ENCODE measurements at regions of chr2 and their contacts with region 1.

Region 1: DNA sequence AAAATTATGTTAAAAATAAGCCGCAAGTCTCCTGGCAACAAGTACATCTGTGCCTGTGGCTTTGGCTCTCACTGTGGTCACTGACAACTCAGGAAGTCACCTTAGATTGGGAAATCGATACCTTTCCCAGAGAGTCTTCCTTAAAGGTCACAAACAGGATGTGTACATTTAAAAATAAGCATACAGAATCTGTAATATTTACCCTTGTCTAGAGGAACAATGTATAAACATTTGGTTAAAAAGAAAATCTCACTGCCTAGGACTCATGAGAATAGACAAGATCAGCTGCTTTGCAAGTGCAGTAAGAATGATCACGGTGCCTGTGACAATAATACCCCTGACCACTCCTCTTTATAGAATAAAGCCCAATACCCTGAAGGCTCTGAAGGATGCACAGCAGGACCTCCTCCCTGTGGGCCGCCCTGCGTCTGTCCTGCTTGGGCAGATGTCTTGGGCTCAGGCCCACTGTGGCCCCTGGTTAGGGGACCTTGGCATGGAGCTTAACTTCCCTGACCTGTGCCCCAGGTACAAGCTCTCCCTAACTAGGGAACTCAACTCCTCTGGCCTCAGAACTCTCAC is 98.0 kb upstream of the MGAT4A start:
- DNase-seq: no peak
- ATAC-seq: no peak
- H3K4me3 ChIP-seq: no peak overlapping the region
- H3K27ac ChIP-seq: no peak overlapping the region
- H3K4me1 ChIP-seq: no peaks in the 10 kb centered on the region
- H3K27me3 ChIP-seq: peaks cover 4 to 52% of the 10 kb centered on the region in 2 experiments; a peak in 3 of 5 replicates
- CTCF ChIP-seq: no peak
- EP300 ChIP-seq: no peak
- POLR2A ChIP-seq: no peak
- RAD21 ChIP-seq: no peak

Region 2: GRCh38 chr2:98654699-98655495 is 174.0 kb before region 1 on chr2:
- CTCF ChIA-PET with region 1: no interaction called
- POLR2A ChIA-PET with region 1: no interaction called
- in situ Hi-C with region 1: loop called (anchors 5 kb)
- intact Hi-C with region 1: no loop called
- DNase-seq: peak in 1 of 4 experiments; percentile 6
- ATAC-seq: no peak
- H3K4me3 ChIP-seq: no peak overlapping the region
- H3K27ac ChIP-seq: no peak overlapping the region
- H3K4me1 ChIP-seq: no peaks in the 10 kb centered on the region
- H3K27me3 ChIP-seq: no peaks in the 10 kb centered on the region; a peak in 1 of 5 replicates
- CTCF ChIP-seq: no peak
- EP300 ChIP-seq: no peak
- POLR2A ChIP-seq: no peak
- RAD21 ChIP-seq: no peak

Measured in K562 (cell line).